ENCODE measurements at regions of chr16 and their contacts with region 1.

Region 1: GRCh38 chr16:11161974-11162373 is 94.0 kb downstream of the SOCS1 start:
- DNase-seq: no peak
- ATAC-seq: no peak
- H3K4me3 Mint-ChIP-seq: no peak overlapping the region
- H3K27ac Mint-ChIP-seq: peak overlapping the region; percentile 86
- H3K4me1 Mint-ChIP-seq: peaks cover 55% of the 10 kb centered on the region
- H3K27me3 Mint-ChIP-seq: no peaks in the 10 kb centered on the region
- CTCF ChIP-seq: no peak

Region 2: GRCh38 chr16:11145173-11145818 is 16.7 kb before region 1 on chr16:
- CTCF ChIA-PET with region 1: interaction called, 5 read pairs
- POLR2A ChIA-PET with region 1: interaction called, 10 read pairs
- intact Hi-C with region 1: no loop called
- DNase-seq: no peak
- ATAC-seq: no peak
- H3K4me3 Mint-ChIP-seq: no peak overlapping the region
- H3K27ac Mint-ChIP-seq: no peak overlapping the region
- H3K4me1 Mint-ChIP-seq: peaks cover 12% of the 10 kb centered on the region
- H3K27me3 Mint-ChIP-seq: no peaks in the 10 kb centered on the region
- CTCF ChIP-seq: no peak

Region 3: GRCh38 chr16:11263737-11264136 is 101.8 kb after region 1 on chr16:
- CTCF ChIA-PET with region 1: no interaction called
- POLR2A ChIA-PET with region 1: no interaction called
- intact Hi-C with region 1: no loop called
- DNase-seq: peak; percentile 83
- ATAC-seq: peak; percentile 88
- H3K4me3 Mint-ChIP-seq: peak overlapping the region; percentile 2
- H3K27ac Mint-ChIP-seq: peak overlapping the region; percentile 79
- H3K4me1 Mint-ChIP-seq: peaks cover 36% of the 10 kb centered on the region
- H3K27me3 Mint-ChIP-seq: no peaks in the 10 kb centered on the region
- CTCF ChIP-seq: no peak

Region 4: GRCh38 chr16:11481987-11482386 is 320.0 kb after region 1 on chr16:
- CTCF ChIA-PET with region 1: no interaction called
- POLR2A ChIA-PET with region 1: no interaction called
- intact Hi-C with region 1: no loop called
- DNase-seq: no peak
- ATAC-seq: no peak
- H3K4me3 Mint-ChIP-seq: no peak overlapping the region
- H3K27ac Mint-ChIP-seq: no peak overlapping the region
- H3K4me1 Mint-ChIP-seq: no peaks in the 10 kb centered on the region
- H3K27me3 Mint-ChIP-seq: no peaks in the 10 kb centered on the region
- CTCF ChIP-seq: no peak

Region 5: GRCh38 chr16:11497851-11498289 is 335.9 kb after region 1 on chr16:
- CTCF ChIA-PET with region 1: no interaction called
- POLR2A ChIA-PET with region 1: no interaction called
- intact Hi-C with region 1: no loop called
- DNase-seq: peak; percentile 26
- ATAC-seq: no peak
- H3K4me3 Mint-ChIP-seq: no peak overlapping the region
- H3K27ac Mint-ChIP-seq: peak overlapping the region; percentile 88
- H3K4me1 Mint-ChIP-seq: peaks cover 33% of the 10 kb centered on the region
- H3K27me3 Mint-ChIP-seq: no peaks in the 10 kb centered on the region
- CTCF ChIP-seq: no peak

Measured in activated CD8-positive, alpha-beta T cell treated with anti-CD3 and anti-CD28 coated beads for 36 hours (primary cell).